Body of pancreas (tissue), 4 donors: ENCODE measurements at regions of chr1 and their contacts with region 1.

Region 1: DNA sequence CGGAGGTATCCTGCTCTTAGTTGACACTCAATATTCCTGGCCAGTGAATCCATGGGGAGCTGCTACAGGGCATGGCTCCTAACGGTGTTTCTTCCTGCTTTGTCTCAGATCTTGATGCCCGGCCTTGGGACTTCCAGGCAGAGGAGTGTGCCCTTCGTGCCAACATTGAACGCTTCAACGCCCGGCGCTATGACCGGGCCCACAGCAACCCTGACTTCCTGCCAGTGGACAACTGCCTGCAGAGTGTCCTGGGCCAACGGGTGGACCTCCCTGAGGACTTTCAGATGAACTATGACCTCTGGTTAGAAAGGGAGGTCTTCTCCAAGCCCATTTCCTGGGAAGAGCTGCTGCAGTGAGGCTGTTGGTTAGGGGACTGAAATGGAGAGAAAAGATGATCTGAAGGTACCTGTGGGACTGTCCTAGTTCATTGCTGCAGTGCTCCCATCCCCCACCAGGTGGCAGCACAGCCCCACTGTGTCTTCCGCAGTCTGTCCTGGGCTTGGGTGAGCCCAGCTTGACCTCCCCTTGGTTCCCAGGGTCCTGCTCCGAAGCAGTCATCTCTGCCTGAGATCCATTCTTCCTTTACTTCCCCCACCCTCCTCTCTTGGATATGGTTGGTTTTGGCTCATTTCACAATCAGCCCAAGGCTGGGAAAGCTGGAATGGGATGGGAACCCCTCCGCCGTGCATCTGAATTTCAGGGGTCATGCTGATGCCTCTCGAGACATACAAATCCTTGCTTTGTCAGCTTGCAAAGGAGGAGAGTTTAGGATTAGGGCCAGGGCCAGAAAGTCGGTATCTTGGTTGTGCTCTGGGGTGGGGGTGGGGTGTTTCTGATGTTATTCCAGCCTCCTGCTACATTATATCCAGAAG is 16.7 kb downstream of the ALX3 start:
- DNase-seq: peak; percentile 61 to 82 (median 68)
- ATAC-seq: no peak
- H3K4me3 ChIP-seq: no peak overlapping the region
- H3K27ac ChIP-seq: no peak overlapping the region
- H3K4me1 ChIP-seq: peaks cover 9% of the 10 kb centered on the region
- H3K27me3 ChIP-seq: no peaks in the 10 kb centered on the region
- CTCF ChIP-seq: peak; percentile 80 to 92 (median 90)
- POLR2A ChIP-seq: no peak

Region 2: DNA sequence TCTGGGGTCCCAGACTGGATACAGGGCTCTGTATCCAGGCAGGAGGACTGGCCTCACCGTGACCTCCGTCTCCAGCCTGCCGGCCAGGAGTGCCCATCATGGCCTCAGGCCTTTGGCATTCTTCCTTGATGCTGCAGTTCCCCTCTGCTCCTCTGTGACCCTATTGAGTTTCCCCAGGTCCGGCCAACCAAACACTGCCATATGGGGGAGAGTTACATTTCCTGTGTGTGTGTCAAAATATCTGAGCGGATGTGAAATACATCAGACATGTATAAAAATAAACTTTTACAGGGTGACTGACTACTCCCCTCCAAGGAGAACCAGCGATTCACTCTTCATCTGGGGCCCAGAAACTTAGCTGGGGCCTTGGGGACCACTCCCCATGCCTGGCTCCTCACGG is 48.3 kb after region 1 on chr1:
- intact Hi-C with region 1: loop called (anchors 5 kb)
- DNase-seq: no peak
- ATAC-seq: no peak
- H3K4me3 ChIP-seq: no peak overlapping the region
- H3K27ac ChIP-seq: no peak overlapping the region
- H3K4me1 ChIP-seq: no peaks in the 10 kb centered on the region
- H3K27me3 ChIP-seq: no peaks in the 10 kb centered on the region
- CTCF ChIP-seq: no peak
- POLR2A ChIP-seq: no peak